ENCODE measurements at regions of chr22 and their contacts with region 1.

Region 1: DNA sequence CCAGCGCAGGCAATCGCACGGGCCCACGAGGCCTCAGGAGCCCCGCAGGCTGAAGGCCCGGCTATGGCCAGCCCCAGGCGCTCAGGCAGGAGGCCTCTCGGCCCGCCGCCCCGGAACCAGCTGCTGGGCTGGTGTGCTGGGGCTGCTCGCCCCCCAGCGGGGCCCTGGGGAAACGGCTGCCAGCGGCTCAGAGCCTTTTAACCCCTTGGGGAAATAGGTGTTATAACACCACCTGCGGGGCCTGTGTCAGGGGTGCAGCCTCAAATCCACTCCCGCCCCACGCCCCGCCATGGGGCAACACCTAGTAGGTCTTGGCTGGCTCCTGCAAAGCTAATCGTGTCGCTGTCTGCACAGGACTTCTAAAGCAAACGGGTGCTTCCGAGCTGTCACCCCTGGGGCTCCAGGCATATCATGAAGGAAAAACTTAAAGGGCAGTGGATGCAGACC is 237.4 kb downstream of the TTC28 start:
- DNase-seq: peak; percentile 90
- H3K4me3 Mint-ChIP-seq: peak overlapping the region; percentile 81
- H3K27ac Mint-ChIP-seq: peak overlapping the region; percentile 65
- H3K4me1 Mint-ChIP-seq: peaks cover 23% of the 10 kb centered on the region
- H3K27me3 Mint-ChIP-seq: peaks cover 2% of the 10 kb centered on the region

Region 2: GRCh38 chr22:28019881-28020871 is 422.1 kb before region 1 on chr22:
- CTCF ChIA-PET with region 1: interaction called, 3 read pairs
- intact Hi-C with region 1: loop called (anchors 1 kb)
- DNase-seq: peak; percentile 78
- H3K4me3 Mint-ChIP-seq: no peak overlapping the region
- H3K27ac Mint-ChIP-seq: no peak overlapping the region
- H3K4me1 Mint-ChIP-seq: peaks cover 2% of the 10 kb centered on the region
- H3K27me3 Mint-ChIP-seq: no peaks in the 10 kb centered on the region

Region 3: GRCh38 chr22:28051787-28052356 is 390.4 kb before region 1 on chr22:
- CTCF ChIA-PET with region 1: interaction called, 3 read pairs
- intact Hi-C with region 1: loop called (anchors 5 kb)
- DNase-seq: peak; percentile 58
- H3K4me3 Mint-ChIP-seq: no peak overlapping the region
- H3K27ac Mint-ChIP-seq: no peak overlapping the region
- H3K4me1 Mint-ChIP-seq: no peaks in the 10 kb centered on the region
- H3K27me3 Mint-ChIP-seq: no peaks in the 10 kb centered on the region

Region 4: DNA sequence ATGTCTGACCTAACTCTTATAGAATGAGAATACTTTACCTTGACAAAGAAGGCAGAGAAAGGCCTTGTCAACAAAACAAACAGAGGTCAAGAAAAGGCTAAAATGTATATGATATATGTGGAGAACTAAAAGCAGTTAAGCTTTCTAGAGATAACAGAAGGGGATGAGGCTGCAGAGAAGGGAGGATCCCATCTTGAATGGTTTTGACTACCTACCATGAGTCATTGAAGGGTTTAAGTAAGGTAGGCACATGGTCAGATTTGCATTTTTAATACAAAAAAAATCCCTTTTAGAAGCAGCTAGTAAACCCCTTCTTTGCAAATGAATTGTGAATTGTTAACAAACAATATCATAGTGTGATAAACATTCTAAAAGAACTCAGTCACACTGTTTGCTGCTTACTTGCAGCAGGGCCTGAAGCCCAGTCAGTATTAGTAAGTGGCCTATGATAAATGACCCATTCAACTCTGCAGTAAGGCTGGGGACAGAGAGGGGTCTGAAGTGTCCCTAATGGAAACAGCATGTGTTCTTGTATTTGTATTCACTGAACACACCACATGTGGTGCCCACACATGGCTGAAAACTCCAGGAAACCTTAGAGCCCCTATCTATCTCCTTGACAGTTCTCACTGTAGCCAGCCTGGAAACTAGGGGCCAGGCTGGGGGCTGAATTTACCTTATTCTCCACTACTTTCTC is 194.5 kb before region 1 on chr22:
- CTCF ChIA-PET with region 1: interaction called, 3 read pairs
- intact Hi-C with region 1: loop called (anchors 1 kb)
- DNase-seq: no peak
- H3K4me3 Mint-ChIP-seq: no peak overlapping the region
- H3K27ac Mint-ChIP-seq: no peak overlapping the region
- H3K4me1 Mint-ChIP-seq: no peaks in the 10 kb centered on the region
- H3K27me3 Mint-ChIP-seq: no peaks in the 10 kb centered on the region

Region 5: GRCh38 chr22:28375761-28376534 is 66.3 kb before region 1 on chr22:
- CTCF ChIA-PET with region 1: interaction called, 8 read pairs
- intact Hi-C with region 1: loop called (anchors 5 kb)
- DNase-seq: no peak
- H3K4me3 Mint-ChIP-seq: no peak overlapping the region
- H3K27ac Mint-ChIP-seq: no peak overlapping the region
- H3K4me1 Mint-ChIP-seq: peaks cover 21% of the 10 kb centered on the region
- H3K27me3 Mint-ChIP-seq: no peaks in the 10 kb centered on the region

Region 6: GRCh38 chr22:28408709-28409108 is 33.6 kb before region 1 on chr22:
- CTCF ChIA-PET with region 1: no interaction called
- intact Hi-C with region 1: no loop called
- DNase-seq: no peak
- H3K4me3 Mint-ChIP-seq: no peak overlapping the region
- H3K27ac Mint-ChIP-seq: no peak overlapping the region
- H3K4me1 Mint-ChIP-seq: no peaks in the 10 kb centered on the region
- H3K27me3 Mint-ChIP-seq: no peaks in the 10 kb centered on the region

Region 7: DNA sequence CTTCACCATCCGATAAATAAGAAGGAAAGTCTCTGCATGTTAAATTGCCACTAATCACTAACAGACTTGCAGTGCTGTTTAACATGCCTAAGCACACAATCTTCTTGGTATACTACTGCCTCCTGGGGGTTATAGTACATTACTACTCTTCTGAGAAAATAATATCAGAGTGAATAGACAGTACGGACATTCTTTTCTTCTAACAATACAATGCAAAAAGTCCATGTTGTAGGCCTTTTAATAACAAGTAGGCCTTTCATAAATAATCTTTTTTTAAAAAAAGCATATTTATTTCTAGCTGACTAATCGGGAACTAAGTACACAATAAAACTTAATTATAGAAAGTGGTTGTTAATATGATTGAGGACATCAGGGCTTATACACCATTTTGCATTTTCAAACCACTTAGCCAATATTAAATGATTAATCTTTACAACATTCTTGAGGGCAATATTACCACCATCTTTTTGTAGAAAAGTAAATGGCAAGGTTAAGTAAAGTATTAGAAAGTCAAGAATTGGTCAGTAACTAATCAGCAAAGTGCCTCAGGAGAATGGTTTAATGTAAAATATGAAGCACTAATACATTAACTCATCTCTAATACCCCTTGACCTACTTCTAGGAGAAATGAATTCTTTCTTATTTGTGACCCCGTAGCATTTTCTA is 152.6 kb after region 1 on chr22:
- CTCF ChIA-PET with region 1: no interaction called
- intact Hi-C with region 1: loop called (anchors 5 kb)
- DNase-seq: no peak
- H3K4me3 Mint-ChIP-seq: no peak overlapping the region
- H3K27ac Mint-ChIP-seq: no peak overlapping the region
- H3K4me1 Mint-ChIP-seq: no peaks in the 10 kb centered on the region
- H3K27me3 Mint-ChIP-seq: peaks cover 4% of the 10 kb centered on the region

Region 8: DNA sequence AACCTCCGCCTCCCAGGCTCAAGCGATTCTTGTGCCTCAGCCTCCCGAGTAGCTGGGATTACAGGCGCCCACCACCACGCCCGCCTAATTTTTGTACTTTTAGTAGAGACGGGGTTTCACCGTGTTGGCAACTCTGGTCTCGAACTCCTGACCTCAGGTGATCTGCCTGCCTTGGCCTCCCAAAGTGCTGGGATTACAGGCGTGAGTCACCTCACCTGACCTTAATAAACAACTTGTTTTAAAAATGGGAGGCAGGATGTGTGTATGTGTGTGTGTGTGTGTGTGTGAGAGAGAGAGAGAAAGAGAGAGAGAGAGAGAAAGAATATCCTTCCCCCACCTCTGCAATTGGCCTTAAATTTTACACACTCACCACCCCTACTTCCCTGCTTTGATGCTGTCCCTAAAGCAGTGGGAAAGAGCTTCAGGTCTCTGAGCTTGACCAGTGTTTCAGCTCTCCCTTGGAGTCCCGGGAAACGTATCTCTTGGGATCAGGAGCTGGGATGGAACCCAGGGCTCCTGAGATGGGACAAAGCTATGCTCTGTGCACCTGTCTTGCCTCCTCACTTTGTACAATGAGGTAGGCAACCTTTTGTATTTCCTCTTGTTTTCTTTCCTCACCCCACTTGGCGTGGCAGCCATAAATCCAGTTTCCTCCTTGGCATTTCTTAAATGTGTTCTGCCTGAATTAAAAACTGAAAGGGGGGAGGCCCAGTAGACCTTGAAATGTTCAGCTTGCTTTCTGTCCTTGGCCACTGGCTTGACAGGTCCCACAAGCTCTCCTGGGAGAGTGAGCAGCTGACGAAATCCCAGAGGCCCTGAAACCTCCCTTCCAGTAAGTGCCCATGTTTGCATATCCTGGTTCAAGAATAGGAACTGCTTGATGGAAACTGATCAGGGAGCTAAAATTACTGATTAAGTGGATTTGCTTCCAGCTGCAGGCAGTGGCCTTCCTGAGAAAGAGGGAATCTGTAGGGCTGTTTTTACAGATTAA is 375.9 kb after region 1 on chr22:
- CTCF ChIA-PET with region 1: no interaction called
- intact Hi-C with region 1: loop called (anchors 10 kb)
- DNase-seq: peak; percentile 54
- H3K4me3 Mint-ChIP-seq: no peak overlapping the region
- H3K27ac Mint-ChIP-seq: peak overlapping the region; percentile 30
- H3K4me1 Mint-ChIP-seq: peaks cover 71% of the 10 kb centered on the region
- H3K27me3 Mint-ChIP-seq: no peaks in the 10 kb centered on the region